ENCODE measurements at regions of chr1 and their contacts with region 1.

Region 1: GRCh38 chr1:62070384-62071011 is 124.2 kb upstream of the L1TD1 start:
- DNase-seq: no peak
- ATAC-seq: no peak
- H3K4me3 ChIP-seq: no peak overlapping the region
- H3K27ac ChIP-seq: peak overlapping the region; percentile 69 to 96 (median 91)
- H3K4me1 ChIP-seq: peaks cover 0 to 45% (median 20%) of the 10 kb centered on the region in 12 donors
- H3K27me3 ChIP-seq: no peaks in the 10 kb centered on the region
- CTCF ChIP-seq: peak; percentile 29 to 69 (median 56)
- POLR2A ChIP-seq: no peak

Region 2: GRCh38 chr1:61865646-61866231 is 204.8 kb before region 1 on chr1:
- intact Hi-C with region 1: loop called in 3 of 10 experiments (anchors 5 to 10 kb)
- DNase-seq: peak in 4 of 5 donors; percentile 19 to 49 (median 37)
- ATAC-seq: peak; percentile 80 to 91 (median 83)
- H3K4me3 ChIP-seq: no peak overlapping the region
- H3K27ac ChIP-seq: peak overlapping the region in 10 of 12 donors; percentile 0 to 54 (median 38)
- H3K4me1 ChIP-seq: peaks cover 0 to 19% (median 0%) of the 10 kb centered on the region in 12 donors
- H3K27me3 ChIP-seq: no peaks in the 10 kb centered on the region
- CTCF ChIP-seq: no peak
- POLR2A ChIP-seq: no peak

Region 3: DNA sequence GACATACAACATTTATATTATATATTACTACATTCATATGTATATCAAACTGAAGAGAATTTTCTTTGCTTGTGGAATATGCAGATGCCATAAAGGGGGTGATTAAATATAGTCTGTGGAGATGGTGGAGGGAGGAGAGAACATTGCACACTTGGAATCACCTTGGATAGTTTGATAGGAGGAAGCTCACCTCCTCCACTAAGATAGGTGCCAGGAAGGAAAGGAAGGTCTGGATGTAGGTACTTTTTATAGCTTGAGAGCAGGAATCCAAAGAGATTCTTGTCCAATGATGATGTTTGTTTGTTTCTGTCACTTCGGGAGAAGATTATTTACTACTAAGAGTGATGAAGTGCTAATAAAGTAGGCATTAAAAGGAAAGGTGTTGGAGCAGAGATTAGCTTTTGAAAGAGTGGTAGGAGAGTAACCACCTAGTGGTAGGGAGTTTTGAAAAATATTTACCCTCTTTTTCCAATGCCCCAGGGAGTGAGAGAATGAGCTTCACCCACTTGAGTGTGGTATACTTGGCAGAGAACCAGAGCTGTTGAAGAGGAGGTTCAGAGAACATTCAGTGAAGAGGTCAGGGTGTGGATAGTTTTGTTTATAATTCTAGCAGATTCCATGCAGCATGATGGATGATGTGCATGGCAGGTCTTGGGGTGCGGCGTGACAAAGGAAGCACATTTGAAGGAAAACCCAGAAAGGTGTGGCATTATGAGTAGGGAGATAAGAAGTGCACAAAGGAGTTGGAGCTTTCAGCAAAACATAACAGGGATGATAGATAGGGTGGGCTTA is 183.2 kb before region 1 on chr1:
- intact Hi-C with region 1: loop called in 1 of 10 experiments (anchors 2 kb)
- DNase-seq: peak in 1 of 5 donors; percentile 11
- ATAC-seq: peak; percentile 69 to 87 (median 82)
- H3K4me3 ChIP-seq: no peak overlapping the region
- H3K27ac ChIP-seq: peak overlapping the region in 10 of 12 donors; percentile 21 to 50 (median 43)
- H3K4me1 ChIP-seq: peaks cover 0 to 22% (median 13%) of the 10 kb centered on the region in 12 donors
- H3K27me3 ChIP-seq: no peaks in the 10 kb centered on the region
- CTCF ChIP-seq: no peak
- POLR2A ChIP-seq: no peak

Region 4: GRCh38 chr1:61950418-61950817 is 120.1 kb before region 1 on chr1:
- intact Hi-C with region 1: loop called in 9 of 10 experiments (anchors 1 to 5 kb)
- DNase-seq: no peak
- ATAC-seq: peak in 1 of 4 donors; percentile 33
- H3K4me3 ChIP-seq: no peak overlapping the region
- H3K27ac ChIP-seq: peak overlapping the region in 9 of 12 donors; percentile 16 to 91 (median 53)
- H3K4me1 ChIP-seq: peaks cover 0 to 9% (median 4%) of the 10 kb centered on the region in 12 donors
- H3K27me3 ChIP-seq: no peaks in the 10 kb centered on the region
- CTCF ChIP-seq: peak in 10 of 12 donors; percentile 7 to 50 (median 39)
- POLR2A ChIP-seq: no peak

Region 5: GRCh38 chr1:61973100-61973837 is 97.2 kb before region 1 on chr1:
- intact Hi-C with region 1: loop called in 1 of 10 experiments (anchors 5 kb)
- DNase-seq: no peak
- ATAC-seq: peak; percentile 60 to 80 (median 70)
- H3K4me3 ChIP-seq: peak overlapping the region in 1 of 12 donors; percentile 13
- H3K27ac ChIP-seq: peak overlapping the region in 10 of 12 donors; percentile 7 to 66 (median 44)
- H3K4me1 ChIP-seq: peaks cover 0 to 18% (median 0%) of the 10 kb centered on the region in 12 donors
- H3K27me3 ChIP-seq: no peaks in the 10 kb centered on the region
- CTCF ChIP-seq: no peak
- POLR2A ChIP-seq: no peak